ENCODE measurements at regions of chr19 and their contacts with region 1.

Region 1: GRCh38 chr19:54481322-54481930 is 8.3 kb upstream of the CDC42EP5 start:
- DNase-seq: no peak
- ATAC-seq: peak; percentile 69
- H3K4me3 ChIP-seq: no peak overlapping the region
- H3K27ac ChIP-seq: no peak overlapping the region
- H3K4me1 ChIP-seq: peaks cover 12% of the 10 kb centered on the region
- H3K27me3 ChIP-seq: no peaks in the 10 kb centered on the region; a peak in 1 of 4 replicates
- CTCF ChIP-seq: peak; percentile 61 to 74 (median 69)
- EP300 ChIP-seq: no peak
- POLR2A ChIP-seq: no peak
- RAD21 ChIP-seq: peak; percentile 83

Region 2: GRCh38 chr19:54439174-54439853 is 42.1 kb before region 1 on chr19:
- CTCF ChIA-PET with region 1: no interaction called
- POLR2A ChIA-PET with region 1: no interaction called
- RAD21 ChIA-PET with region 1: no interaction called
- SMC1A ChIA-PET with region 1: no interaction called
- in situ Hi-C with region 1: no loop called
- intact Hi-C with region 1: no loop called
- DNase-seq: no peak
- ATAC-seq: peak; percentile 73
- H3K4me3 ChIP-seq: no peak overlapping the region
- H3K27ac ChIP-seq: no peak overlapping the region
- H3K4me1 ChIP-seq: no peaks in the 10 kb centered on the region
- H3K27me3 ChIP-seq: no peaks in the 10 kb centered on the region
- CTCF ChIP-seq: peak; percentile 31 to 37 (median 35); a peak in 4 of 6 replicates
- EP300 ChIP-seq: no peak
- POLR2A ChIP-seq: no peak
- RAD21 ChIP-seq: peak; percentile 35; the same call in 1 of the 2 replicates

Region 3: GRCh38 chr19:54506079-54506478 is 24.7 kb after region 1 on chr19:
- CTCF ChIA-PET with region 1: interaction called, 11 read pairs
- POLR2A ChIA-PET with region 1: no interaction called
- RAD21 ChIA-PET with region 1: no interaction called
- SMC1A ChIA-PET with region 1: no interaction called
- in situ Hi-C with region 1: no loop called
- intact Hi-C with region 1: no loop called
- DNase-seq: no peak
- ATAC-seq: no peak
- H3K4me3 ChIP-seq: no peak overlapping the region
- H3K27ac ChIP-seq: no peak overlapping the region
- H3K4me1 ChIP-seq: peaks cover 10% of the 10 kb centered on the region
- H3K27me3 ChIP-seq: no peaks in the 10 kb centered on the region
- CTCF ChIP-seq: no peak
- EP300 ChIP-seq: no peak
- POLR2A ChIP-seq: no peak
- RAD21 ChIP-seq: no peak

Region 4: DNA sequence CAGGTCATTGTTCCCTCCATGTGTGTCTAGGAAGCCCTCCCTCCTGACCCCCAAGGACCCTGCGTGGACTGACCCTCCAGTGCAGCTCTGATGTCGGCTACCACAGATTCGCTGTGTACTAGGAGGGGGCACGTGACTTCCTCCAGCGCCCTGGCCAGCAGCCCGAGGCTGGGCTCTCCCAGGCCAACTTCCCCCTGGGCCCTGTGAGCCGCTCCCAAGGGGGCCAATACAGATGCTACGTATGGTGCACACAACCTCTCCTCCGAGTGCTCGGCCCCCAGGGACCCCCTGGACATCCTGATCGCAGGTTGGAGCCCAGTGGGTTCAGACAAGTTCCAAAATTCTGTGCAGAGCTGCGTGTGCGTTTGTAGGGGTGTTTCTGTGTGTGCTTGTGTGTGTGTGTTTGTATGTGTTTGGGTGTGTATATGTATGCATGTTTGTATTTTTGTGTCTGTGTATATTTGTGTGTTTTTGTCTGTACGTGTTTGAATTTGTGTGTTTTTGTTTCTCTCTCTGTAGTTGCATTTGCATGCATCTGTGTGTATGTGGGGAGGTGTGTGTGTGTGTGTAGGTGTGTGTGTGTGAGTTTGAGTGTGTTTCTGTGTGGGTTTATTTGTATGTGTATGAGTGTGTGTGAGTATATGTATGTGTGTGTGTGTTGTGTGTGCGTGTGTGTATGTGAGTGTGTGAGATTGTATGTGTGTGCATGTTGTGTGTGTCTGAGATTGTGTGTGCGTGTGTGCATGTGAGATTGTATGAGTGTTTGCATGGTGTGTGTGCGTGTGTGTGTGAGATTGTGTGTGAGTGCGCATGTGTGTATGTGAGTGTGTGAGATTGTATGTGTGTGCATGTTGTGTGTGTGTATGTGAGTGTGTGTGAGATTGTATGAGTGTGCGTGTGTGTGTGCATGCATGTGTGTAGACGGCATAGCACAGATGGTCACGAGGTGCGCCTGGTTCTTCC is 70.8 kb after region 1 on chr19:
- CTCF ChIA-PET with region 1: interaction called, 5 read pairs
- POLR2A ChIA-PET with region 1: no interaction called
- RAD21 ChIA-PET with region 1: no interaction called
- SMC1A ChIA-PET with region 1: interaction called, 5 read pairs
- in situ Hi-C with region 1: no loop called
- intact Hi-C with region 1: loop called (anchors 5 kb)
- DNase-seq: peak; percentile 40
- ATAC-seq: peak; percentile 87
- H3K4me3 ChIP-seq: peak overlapping the region; percentile 48; the same call in 1 of the 2 replicates
- H3K27ac ChIP-seq: peak overlapping the region; percentile 33
- H3K4me1 ChIP-seq: peaks cover 27% of the 10 kb centered on the region
- H3K27me3 ChIP-seq: no peaks in the 10 kb centered on the region
- CTCF ChIP-seq: no peak
- EP300 ChIP-seq: no peak
- POLR2A ChIP-seq: no peak
- RAD21 ChIP-seq: no peak

Region 5: DNA sequence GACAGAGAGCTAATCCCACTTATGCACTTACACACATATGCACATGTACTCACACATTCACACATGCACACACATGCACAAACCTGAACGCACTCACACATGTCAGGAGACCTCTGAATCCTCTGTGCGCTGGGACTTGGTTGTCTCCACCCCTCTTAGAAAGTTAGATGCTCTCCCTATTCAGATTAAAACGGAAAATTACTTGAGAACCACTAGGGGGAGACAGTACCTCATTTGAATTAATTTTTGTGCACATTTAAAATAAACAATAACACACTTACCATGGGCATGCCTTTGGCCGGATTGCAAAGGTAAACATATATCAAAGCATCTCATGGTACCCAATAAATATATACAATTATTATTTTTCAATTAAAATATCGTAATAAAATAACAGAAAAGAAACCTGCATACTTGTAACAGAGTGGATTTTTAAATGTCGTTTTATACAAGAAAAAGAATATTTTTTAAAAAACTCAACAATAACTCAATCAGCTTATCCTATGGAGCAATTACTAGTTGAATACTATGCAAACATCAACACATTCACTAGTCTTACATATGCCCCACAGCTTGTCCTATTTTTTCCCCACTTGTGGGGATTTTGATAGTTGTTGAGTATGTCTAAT is 171.9 kb after region 1 on chr19:
- CTCF ChIA-PET with region 1: interaction called, 151 read pairs
- POLR2A ChIA-PET with region 1: no interaction called
- RAD21 ChIA-PET with region 1: interaction called, 59 read pairs
- SMC1A ChIA-PET with region 1: interaction called, 70 read pairs
- in situ Hi-C with region 1: loop called (anchors 5 kb)
- intact Hi-C with region 1: no loop called
- DNase-seq: no peak
- ATAC-seq: peak; percentile 76
- H3K4me3 ChIP-seq: no peak overlapping the region
- H3K27ac ChIP-seq: no peak overlapping the region
- H3K4me1 ChIP-seq: peaks cover 5% of the 10 kb centered on the region
- H3K27me3 ChIP-seq: no peaks in the 10 kb centered on the region
- CTCF ChIP-seq: peak; percentile 51 to 67 (median 63)
- EP300 ChIP-seq: no peak
- POLR2A ChIP-seq: no peak
- RAD21 ChIP-seq: peak; percentile 75

Region 6: DNA sequence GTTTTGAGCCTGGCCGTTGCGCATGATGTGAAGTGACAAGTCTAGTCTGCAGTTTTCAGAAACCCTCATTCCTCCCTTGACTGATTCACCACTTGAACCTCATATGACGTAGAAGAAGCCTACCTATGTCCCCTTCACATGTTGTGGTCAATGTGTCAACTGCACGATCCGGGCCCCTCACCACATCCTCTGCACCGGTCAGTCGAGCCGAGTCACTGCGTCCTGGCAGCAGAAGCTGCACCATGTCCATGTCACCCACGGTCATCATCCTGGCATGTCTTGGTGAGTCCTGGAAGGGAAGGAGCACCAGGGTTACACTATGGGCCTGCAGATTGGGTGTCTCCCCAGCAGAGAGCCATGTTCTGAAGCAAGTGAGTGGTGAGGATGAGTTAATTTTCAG is 322.0 kb after region 1 on chr19 and contains the start of gene KIR2DL4:
- CTCF ChIA-PET with region 1: no interaction called
- POLR2A ChIA-PET with region 1: no interaction called
- RAD21 ChIA-PET with region 1: no interaction called
- SMC1A ChIA-PET with region 1: no interaction called
- in situ Hi-C with region 1: no loop called
- intact Hi-C with region 1: no loop called
- DNase-seq: no peak
- ATAC-seq: no peak
- H3K4me3 ChIP-seq: no peak within 1 kb of the TSS
- H3K27ac ChIP-seq: no peak within 1 kb of the TSS
- H3K4me1 ChIP-seq: no peaks in the 10 kb centered on the region
- H3K27me3 ChIP-seq: no peaks in the 10 kb centered on the region
- CTCF ChIP-seq: no peak
- EP300 ChIP-seq: no peak
- POLR2A ChIP-seq: no peak
- RAD21 ChIP-seq: no peak
- polyA plus RNA-seq, gene KIR2DL4: not detected

Region 7: GRCh38 chr19:54916822-54917221 is 435.4 kb after region 1 on chr19:
- CTCF ChIA-PET with region 1: interaction called, 3 read pairs
- POLR2A ChIA-PET with region 1: no interaction called
- RAD21 ChIA-PET with region 1: interaction called, 3 read pairs
- SMC1A ChIA-PET with region 1: no interaction called
- in situ Hi-C with region 1: loop called (anchors 10 kb)
- intact Hi-C with region 1: loop called (anchors 10 kb)
- DNase-seq: peak; percentile 51
- ATAC-seq: peak; percentile 58
- H3K4me3 ChIP-seq: no peak overlapping the region
- H3K27ac ChIP-seq: no peak overlapping the region
- H3K4me1 ChIP-seq: peaks cover 10% of the 10 kb centered on the region
- H3K27me3 ChIP-seq: no peaks in the 10 kb centered on the region
- CTCF ChIP-seq: no peak
- EP300 ChIP-seq: no peak
- POLR2A ChIP-seq: no peak
- RAD21 ChIP-seq: no peak

Measured in GM12878 (cell line).